ENCODE measurements at regions of chr12 and their contacts with region 1.

Region 1: GRCh38 chr12:685388-685787 is 22.1 kb upstream of the NINJ2 start:
- DNase-seq: peak; percentile 48 to 96 (median 94)
- ATAC-seq: peak; percentile 96
- H3K4me3 ChIP-seq: no peak overlapping the region
- H3K4me3 Mint-ChIP-seq: peak overlapping the region; percentile 30 to 78 (median 72)
- H3K27ac ChIP-seq: peak overlapping the region; percentile 81
- H3K27ac Mint-ChIP-seq: peak overlapping the region; percentile 90 to 99 (median 98)
- H3K4me1 ChIP-seq: peaks cover 23 to 31% of the 10 kb centered on the region in 2 donors
- H3K4me1 Mint-ChIP-seq: peaks cover 23 to 53% (median 48%) of the 10 kb centered on the region in 7 donors
- H3K27me3 ChIP-seq: no peaks in the 10 kb centered on the region
- H3K27me3 Mint-ChIP-seq: no peaks in the 10 kb centered on the region

Region 2: GRCh38 chr12:575948-576612 is 109.3 kb before region 1 on chr12:
- CTCF ChIA-PET with region 1: interaction called, 3 read pairs
- POLR2A ChIA-PET with region 1: no interaction called
- intact Hi-C with region 1: loop called in 1 of 2 experiments (anchors 1 kb)
- DNase-seq: peak; percentile 63 to 97 (median 83)
- ATAC-seq: peak; percentile 99
- H3K4me3 ChIP-seq: no peak overlapping the region
- H3K4me3 Mint-ChIP-seq: peak overlapping the region; percentile 14 to 70 (median 56)
- H3K27ac ChIP-seq: no peak overlapping the region
- H3K27ac Mint-ChIP-seq: peak overlapping the region in 7 of 9 donors; percentile 44 to 89 (median 76)
- H3K4me1 ChIP-seq: peaks cover 11 to 16% of the 10 kb centered on the region in 2 donors
- H3K4me1 Mint-ChIP-seq: peaks cover 10 to 38% (median 19%) of the 10 kb centered on the region in 7 donors
- H3K27me3 ChIP-seq: no peaks in the 10 kb centered on the region
- H3K27me3 Mint-ChIP-seq: peaks cover 0 to 1% (median 0%) of the 10 kb centered on the region in 5 donors

Region 3: GRCh38 chr12:630656-631632 is 54.4 kb before region 1 on chr12:
- CTCF ChIA-PET with region 1: no interaction called
- POLR2A ChIA-PET with region 1: no interaction called
- intact Hi-C with region 1: loop called in 1 of 2 experiments (anchors 1 kb)
- DNase-seq: peak in 6 of 9 donors; percentile 54 to 88 (median 70)
- ATAC-seq: no peak
- H3K4me3 ChIP-seq: peak overlapping the region; percentile 53
- H3K4me3 Mint-ChIP-seq: peak overlapping the region in 8 of 10 donors; percentile 82 to 96 (median 91)
- H3K27ac ChIP-seq: peak overlapping the region; percentile 72
- H3K27ac Mint-ChIP-seq: peak overlapping the region in 7 of 9 donors; percentile 93 to 98 (median 95)
- H3K4me1 ChIP-seq: peaks cover 0 to 6% of the 10 kb centered on the region in 2 donors
- H3K4me1 Mint-ChIP-seq: peaks cover 7 to 47% (median 34%) of the 10 kb centered on the region in 7 donors
- H3K27me3 ChIP-seq: no peaks in the 10 kb centered on the region
- H3K27me3 Mint-ChIP-seq: no peaks in the 10 kb centered on the region

Region 4: GRCh38 chr12:674272-674781 is 11.1 kb before region 1 on chr12:
- CTCF ChIA-PET with region 1: interaction called, 4 read pairs
- POLR2A ChIA-PET with region 1: interaction called, 9 read pairs
- intact Hi-C with region 1: loop called (anchors 1 kb)
- DNase-seq: peak in 8 of 9 donors; percentile 54 to 84 (median 74)
- ATAC-seq: peak; percentile 95
- H3K4me3 ChIP-seq: peak overlapping the region; percentile 5
- H3K4me3 Mint-ChIP-seq: peak overlapping the region; percentile 31 to 80 (median 69)
- H3K27ac ChIP-seq: peak overlapping the region; percentile 58
- H3K27ac Mint-ChIP-seq: peak overlapping the region; percentile 71 to 96 (median 89)
- H3K4me1 ChIP-seq: peaks cover 31 to 49% of the 10 kb centered on the region in 2 donors
- H3K4me1 Mint-ChIP-seq: peaks cover 28 to 65% (median 51%) of the 10 kb centered on the region in 7 donors
- H3K27me3 ChIP-seq: no peaks in the 10 kb centered on the region
- H3K27me3 Mint-ChIP-seq: no peaks in the 10 kb centered on the region

Region 5: DNA sequence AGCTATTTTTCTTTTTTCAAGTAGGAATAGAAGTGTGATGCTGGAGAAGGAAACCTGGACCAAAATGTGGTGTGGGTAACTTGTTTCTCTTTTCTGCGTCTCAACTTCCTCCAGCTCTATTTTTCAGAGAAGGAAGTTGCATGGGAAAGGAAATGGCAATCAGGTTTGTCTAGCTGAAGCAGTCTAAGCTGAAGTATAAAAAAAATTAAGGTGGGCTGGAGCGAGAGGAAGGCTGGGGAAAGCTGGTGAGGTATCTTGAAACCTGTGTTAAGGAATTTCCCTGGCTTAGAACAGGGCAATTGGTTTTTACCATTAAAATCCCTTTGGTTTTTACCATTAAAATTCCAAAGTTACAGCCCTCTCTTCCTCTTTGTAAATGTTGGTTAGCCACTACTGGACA is 12.1 kb after region 1 on chr12:
- CTCF ChIA-PET with region 1: interaction called, 3 read pairs
- POLR2A ChIA-PET with region 1: interaction called, 5 read pairs
- intact Hi-C with region 1: loop called in 1 of 2 experiments (anchors 1 kb)
- DNase-seq: peak in 5 of 9 donors; percentile 18 to 37 (median 28)
- ATAC-seq: peak; percentile 31
- H3K4me3 ChIP-seq: peak overlapping the region; percentile 11
- H3K4me3 Mint-ChIP-seq: peak overlapping the region in 9 of 10 donors; percentile 55 to 88 (median 72)
- H3K27ac ChIP-seq: peak overlapping the region; percentile 54
- H3K27ac Mint-ChIP-seq: peak overlapping the region in 8 of 9 donors; percentile 38 to 95 (median 91)
- H3K4me1 ChIP-seq: peaks cover 11 to 17% of the 10 kb centered on the region in 2 donors
- H3K4me1 Mint-ChIP-seq: peaks cover 14 to 56% (median 47%) of the 10 kb centered on the region in 7 donors
- H3K27me3 ChIP-seq: no peaks in the 10 kb centered on the region
- H3K27me3 Mint-ChIP-seq: no peaks in the 10 kb centered on the region

Region 6: GRCh38 chr12:724194-724855 is 38.9 kb after region 1 on chr12:
- CTCF ChIA-PET with region 1: interaction called, 6 read pairs
- POLR2A ChIA-PET with region 1: interaction called, 6 read pairs
- intact Hi-C with region 1: loop called (anchors 1 to 5 kb)
- DNase-seq: peak in 1 of 9 donors; percentile 31
- ATAC-seq: peak; percentile 69
- H3K4me3 ChIP-seq: no peak overlapping the region
- H3K4me3 Mint-ChIP-seq: peak overlapping the region; percentile 1 to 56 (median 40)
- H3K27ac ChIP-seq: no peak overlapping the region
- H3K27ac Mint-ChIP-seq: peak overlapping the region; percentile 67 to 95 (median 89)
- H3K4me1 ChIP-seq: peaks cover 26 to 68% of the 10 kb centered on the region in 2 donors
- H3K4me1 Mint-ChIP-seq: peaks cover 37 to 96% (median 89%) of the 10 kb centered on the region in 7 donors
- H3K27me3 ChIP-seq: no peaks in the 10 kb centered on the region
- H3K27me3 Mint-ChIP-seq: no peaks in the 10 kb centered on the region

Measured in naive thymus-derived CD4-positive, alpha-beta T cell (primary cell).